Left colon (tissue), 2 donors: ENCODE measurements at regions of chr12 and their contacts with region 1.

Region 1: DNA sequence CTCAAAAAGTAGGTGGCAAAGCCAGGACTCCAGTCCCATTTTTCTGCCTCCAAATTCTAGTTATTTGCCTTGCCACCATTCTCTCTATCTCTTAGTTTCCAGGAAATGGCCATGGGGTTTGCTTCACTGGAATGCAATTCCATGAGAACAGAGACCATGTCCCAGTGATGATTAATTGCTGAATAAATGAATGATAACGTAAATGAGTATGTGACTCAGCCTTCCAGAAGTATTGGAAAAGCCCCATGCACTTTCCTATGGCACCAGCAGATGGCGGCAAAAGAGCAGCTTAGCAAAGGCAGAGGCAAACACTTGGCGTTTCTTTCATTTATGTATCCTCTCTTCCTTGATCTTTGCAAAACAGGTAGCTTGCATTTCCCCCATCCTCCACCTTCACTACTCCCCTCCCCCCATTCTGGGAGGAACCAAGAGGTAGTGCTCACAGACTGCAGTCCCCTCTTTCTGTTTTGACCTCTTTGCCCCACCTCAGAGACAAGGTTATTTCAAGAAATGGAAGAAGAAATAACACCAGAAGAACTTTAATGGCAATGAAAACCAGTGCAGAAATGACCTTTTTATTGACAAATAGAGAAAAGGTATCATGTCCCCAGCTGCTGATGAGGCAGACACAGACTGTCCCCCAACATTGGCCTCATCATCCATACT is 21.3 kb downstream of the TBX3 start:
- DNase-seq: peak in 1 of 2 donors; percentile 83
- ATAC-seq: peak; percentile 80

Region 2: DNA sequence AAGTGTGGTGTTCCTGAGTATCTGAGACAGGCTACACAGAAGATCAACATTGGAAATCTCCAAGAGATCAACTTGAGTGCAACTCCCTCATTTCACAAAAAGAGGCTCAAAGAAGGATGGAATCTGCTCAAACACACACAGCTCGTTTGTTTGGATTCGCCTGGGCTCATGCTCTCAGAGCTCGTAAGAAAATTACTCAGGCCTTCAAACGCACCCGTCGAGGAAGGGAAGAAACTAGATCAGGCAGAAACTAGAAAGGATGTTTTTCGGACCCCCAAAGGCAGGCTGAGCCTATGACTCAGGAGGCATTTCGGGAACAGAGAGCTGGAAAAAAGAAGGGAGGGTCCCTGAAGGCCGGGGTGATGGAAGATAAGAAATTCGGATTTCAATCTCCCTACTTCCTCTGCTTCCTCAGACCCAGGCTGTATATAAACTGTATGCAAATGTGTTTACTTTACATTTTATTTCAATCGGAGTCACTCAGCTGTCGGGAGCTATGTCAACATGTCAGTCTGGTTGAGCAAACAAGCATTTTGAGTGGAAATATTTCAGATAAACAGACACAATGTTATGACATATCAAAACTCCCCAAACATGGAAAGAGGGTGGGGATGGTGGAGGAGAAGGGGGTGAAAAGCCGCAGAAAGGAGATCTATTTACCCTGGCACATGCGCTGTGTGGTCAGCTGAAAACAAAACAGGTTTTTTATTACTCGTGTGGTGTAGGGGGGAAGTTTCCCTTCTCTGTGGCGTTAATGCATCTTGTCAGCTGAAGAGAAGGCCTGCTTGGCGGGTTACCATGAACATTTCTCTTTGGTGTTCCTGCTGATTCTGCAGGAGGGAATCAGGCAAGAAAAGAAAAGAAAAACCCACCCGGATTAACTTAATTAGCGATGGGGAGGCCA is 150.5 kb after region 1 on chr12:
- intact Hi-C with region 1: no loop called
- DNase-seq: no peak
- ATAC-seq: peak; percentile 51

Region 3: GRCh38 chr12:115035535-115036107 is 373.0 kb after region 1 on chr12:
- intact Hi-C with region 1: no loop called
- DNase-seq: no peak
- ATAC-seq: no peak

Region 4: DNA sequence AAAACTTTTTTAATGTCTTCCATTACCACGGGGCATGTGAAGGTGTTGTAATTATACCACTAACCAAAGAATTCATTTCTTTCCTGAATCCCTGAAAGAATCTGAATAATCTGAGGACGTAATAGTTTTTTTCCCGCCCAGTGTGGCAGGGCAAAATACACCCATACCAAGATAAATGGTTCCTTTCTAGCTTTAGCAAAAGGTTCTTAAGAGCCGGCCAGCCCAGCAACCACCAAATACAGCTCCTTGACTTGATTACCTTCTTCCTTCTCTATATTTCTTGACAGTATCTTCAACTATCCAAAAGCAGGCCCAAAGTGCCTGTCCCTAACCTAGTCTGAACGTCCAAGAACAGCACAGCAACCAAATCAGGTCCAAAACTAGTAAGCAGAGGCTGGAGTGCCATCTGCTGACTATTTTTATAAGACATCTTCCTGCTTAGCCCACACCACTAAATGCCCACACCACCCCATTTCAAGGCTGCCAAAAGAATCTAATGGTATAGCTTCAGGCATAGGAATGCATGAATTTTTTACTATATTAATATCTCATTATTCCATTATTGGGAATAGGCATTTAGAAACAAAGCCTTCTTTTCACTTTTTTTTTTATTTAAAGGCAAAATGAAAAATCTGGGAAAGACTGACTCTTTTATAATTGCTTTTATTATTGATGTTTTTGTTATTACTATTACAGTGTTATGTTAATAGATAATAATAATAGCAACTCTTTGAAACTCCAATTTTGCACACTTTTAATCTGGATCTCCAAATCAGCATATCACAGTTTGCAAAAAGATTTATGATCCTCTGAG is 1090.5 kb after region 1 on chr12:
- intact Hi-C with region 1: loop called (anchors 2 to 10 kb)
- DNase-seq: no peak
- ATAC-seq: peak; percentile 91

Region 5: GRCh38 chr12:115916910-115917668 is 1254.4 kb after region 1 on chr12:
- intact Hi-C with region 1: loop called in 1 of 2 experiments (anchors 5 kb)
- DNase-seq: peak; percentile 32 to 80
- ATAC-seq: peak; percentile 97